ENCODE measurements at regions of chr1 and their contacts with region 1.

Region 1: DNA sequence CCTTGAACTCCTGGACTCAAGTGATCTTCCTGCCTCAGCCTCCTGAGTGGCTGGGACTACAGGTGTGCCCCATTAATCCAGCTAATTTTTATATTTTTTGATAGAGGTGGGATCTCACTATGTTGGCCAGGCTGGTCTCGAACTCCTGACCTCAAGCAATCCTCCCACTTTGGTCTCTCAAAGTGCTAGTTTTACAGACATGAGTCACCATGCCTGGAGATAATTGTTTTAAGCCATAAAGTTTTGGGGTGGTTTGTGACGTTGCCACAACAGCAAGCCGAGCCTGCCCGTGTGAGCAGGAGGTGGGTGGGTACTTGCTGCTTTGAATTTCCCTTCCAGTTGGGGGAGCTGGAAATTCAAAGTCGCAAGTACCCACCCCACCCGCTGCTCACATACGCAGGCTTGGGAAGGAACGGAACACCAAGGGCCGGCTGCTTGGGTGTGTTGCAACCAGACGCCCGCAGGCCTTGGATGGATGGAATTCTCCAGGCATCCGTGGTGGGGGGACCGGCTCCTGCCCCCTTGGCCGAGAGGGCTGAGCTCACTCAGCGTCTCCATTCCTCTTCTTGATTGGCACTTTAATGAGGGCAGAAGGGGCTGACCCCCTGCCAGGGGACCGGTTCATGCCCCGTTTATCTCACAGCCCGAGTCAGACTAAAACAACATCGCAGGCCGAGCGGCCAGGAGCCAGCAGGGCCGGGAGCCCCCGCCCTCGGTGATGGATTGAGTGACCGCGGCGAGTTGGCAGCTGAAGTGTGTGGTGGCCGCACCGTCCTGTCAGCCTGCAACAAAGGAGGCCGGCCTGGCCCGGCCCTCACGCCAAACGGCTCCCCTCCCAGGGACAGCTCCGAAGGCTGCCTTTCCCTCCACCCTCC is 78.1 kb downstream of the DHRS3 start:
- DNase-seq: peak; percentile 36
- H3K27ac ChIP-seq: 0 out of 2 replicates have a peak overlapping the region, but pooled peaks have one; percentile 2
- CTCF ChIP-seq: no peak

Region 2: DNA sequence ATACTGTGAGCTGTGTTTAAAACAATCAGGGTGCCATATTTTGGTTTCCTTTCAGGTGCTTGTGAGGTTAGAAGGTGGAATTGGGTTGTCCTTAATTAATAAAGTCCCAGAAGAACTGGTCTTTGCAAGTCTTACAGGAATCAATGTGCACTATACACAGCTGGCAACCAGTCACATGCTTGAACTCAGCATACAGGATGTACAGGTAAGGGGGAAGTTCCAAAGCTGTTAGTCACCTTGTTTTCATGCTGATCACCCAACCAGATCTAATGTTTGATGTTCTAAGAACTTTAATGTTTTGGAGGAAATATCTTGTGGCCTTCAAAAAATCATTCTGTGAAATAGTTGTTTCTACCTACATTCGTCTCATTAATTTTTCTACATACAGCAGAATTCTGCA is 153.8 kb before region 1 on chr1:
- CTCF ChIA-PET with region 1: no interaction called
- POLR2A ChIA-PET with region 1: no interaction called
- DNase-seq: peak; percentile 64
- H3K27ac ChIP-seq: no peak overlapping the region
- CTCF ChIP-seq: no peak

Region 3: DNA sequence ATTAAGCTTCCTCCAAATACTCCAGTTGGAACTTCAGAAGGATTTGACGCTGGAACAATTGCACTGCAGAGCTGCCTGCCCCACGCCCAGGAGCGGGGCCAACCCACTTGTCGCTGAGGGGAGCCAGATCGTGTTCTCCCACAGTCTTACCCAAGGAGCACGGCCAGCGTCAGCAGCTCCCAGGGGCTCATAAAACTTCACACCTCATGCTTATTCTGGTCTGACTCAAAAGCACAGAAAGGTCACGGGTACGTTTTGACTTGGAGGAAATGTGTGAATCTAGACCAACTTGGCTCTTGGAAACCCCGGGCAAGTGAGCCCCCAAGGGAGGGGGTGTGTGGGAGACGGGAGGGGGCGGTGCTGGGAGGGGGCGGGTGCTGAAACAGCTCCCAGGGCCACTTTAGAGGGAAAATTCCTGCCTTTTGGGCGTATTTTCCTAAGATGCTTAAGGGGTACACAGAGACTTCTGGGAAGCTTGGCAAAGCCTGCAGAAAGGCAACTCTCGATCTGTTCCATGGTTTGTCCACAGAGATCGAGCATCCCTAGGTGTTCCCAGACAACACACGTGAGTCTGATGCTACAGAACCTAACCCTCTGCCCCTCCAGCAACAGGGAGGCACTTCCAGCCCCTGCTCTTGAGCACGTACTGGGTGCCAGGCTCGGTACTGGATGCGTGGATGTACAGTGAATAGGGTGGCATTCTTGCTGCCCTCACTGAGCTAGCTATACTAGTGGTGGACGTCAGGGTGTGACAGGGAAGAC is 20.8 kb before region 1 on chr1:
- CTCF ChIA-PET with region 1: interaction called, 3 read pairs
- POLR2A ChIA-PET with region 1: interaction called, 10 read pairs
- DNase-seq: no peak
- H3K27ac ChIP-seq: no peak overlapping the region
- CTCF ChIP-seq: no peak

Measured in RWPE1 (cell line).